ENCODE measurements at regions of chr11 and their contacts with region 1.

Region 1: GRCh38 chr11:27183672-27184457 is 143.2 kb downstream of the BBOX1 start:
- DNase-seq: peak; percentile 54 to 64
- H3K4me3 ChIP-seq: no peak overlapping the region
- H3K4me3 Mint-ChIP-seq: no peak overlapping the region
- H3K27ac Mint-ChIP-seq: no peak overlapping the region
- H3K4me1 ChIP-seq: peaks cover 26% of the 10 kb centered on the region
- H3K4me1 Mint-ChIP-seq: peaks cover 15% of the 10 kb centered on the region
- H3K27me3 ChIP-seq: no peaks in the 10 kb centered on the region
- H3K27me3 Mint-ChIP-seq: no peaks in the 10 kb centered on the region
- CTCF ChIP-seq: peak; percentile 73 to 83

Region 2: DNA sequence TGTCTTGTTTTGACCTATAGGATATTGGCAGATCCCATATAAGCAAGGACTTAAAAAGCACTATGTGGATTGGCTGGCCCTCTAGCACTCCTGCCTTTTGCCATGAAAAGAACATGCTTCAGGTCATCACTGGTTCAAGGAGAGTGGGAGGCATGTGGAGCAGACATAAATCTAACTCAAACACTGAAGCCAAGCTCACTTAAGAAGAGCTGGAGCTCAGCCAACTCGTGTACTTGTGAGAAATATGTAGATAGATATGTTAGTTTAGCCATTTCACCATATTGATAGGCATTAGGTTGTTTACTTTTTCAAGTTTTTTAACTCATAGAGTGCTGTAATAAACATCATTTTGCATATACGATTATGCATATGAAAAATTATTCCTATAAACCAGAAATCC is 163.1 kb before region 1 on chr11:
- CTCF ChIA-PET with region 1: no interaction called
- POLR2A ChIA-PET with region 1: no interaction called
- intact Hi-C with region 1: no loop called
- DNase-seq: no peak
- H3K4me3 ChIP-seq: no peak overlapping the region
- H3K4me3 Mint-ChIP-seq: no peak overlapping the region
- H3K27ac Mint-ChIP-seq: no peak overlapping the region
- H3K4me1 ChIP-seq: no peaks in the 10 kb centered on the region
- H3K4me1 Mint-ChIP-seq: peaks cover 12% of the 10 kb centered on the region
- H3K27me3 ChIP-seq: no peaks in the 10 kb centered on the region
- H3K27me3 Mint-ChIP-seq: no peaks in the 10 kb centered on the region
- CTCF ChIP-seq: no peak

Region 3: DNA sequence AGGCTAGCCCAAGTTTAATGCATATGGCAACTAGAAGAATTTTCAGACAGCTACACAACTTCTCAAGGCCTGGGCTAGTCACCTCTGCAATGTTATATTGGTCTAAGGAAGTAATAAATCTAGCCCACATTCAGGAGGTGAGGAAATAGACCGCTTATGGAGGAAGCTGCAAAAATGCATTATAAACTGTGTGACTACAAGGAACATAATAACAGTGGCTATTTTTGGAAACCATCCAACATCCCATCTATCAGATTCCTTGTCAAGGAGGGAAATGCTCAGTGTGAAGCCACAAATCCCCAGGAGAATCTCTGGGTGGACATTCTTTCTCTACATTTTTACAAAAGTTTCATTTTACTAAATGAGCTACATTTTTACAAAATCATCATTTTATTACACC is 67.2 kb before region 1 on chr11:
- CTCF ChIA-PET with region 1: no interaction called
- POLR2A ChIA-PET with region 1: no interaction called
- intact Hi-C with region 1: no loop called
- DNase-seq: no peak
- H3K4me3 ChIP-seq: no peak overlapping the region
- H3K4me3 Mint-ChIP-seq: no peak overlapping the region
- H3K27ac Mint-ChIP-seq: no peak overlapping the region
- H3K4me1 ChIP-seq: no peaks in the 10 kb centered on the region
- H3K4me1 Mint-ChIP-seq: no peaks in the 10 kb centered on the region
- H3K27me3 ChIP-seq: no peaks in the 10 kb centered on the region
- H3K27me3 Mint-ChIP-seq: no peaks in the 10 kb centered on the region
- CTCF ChIP-seq: no peak

Region 4: DNA sequence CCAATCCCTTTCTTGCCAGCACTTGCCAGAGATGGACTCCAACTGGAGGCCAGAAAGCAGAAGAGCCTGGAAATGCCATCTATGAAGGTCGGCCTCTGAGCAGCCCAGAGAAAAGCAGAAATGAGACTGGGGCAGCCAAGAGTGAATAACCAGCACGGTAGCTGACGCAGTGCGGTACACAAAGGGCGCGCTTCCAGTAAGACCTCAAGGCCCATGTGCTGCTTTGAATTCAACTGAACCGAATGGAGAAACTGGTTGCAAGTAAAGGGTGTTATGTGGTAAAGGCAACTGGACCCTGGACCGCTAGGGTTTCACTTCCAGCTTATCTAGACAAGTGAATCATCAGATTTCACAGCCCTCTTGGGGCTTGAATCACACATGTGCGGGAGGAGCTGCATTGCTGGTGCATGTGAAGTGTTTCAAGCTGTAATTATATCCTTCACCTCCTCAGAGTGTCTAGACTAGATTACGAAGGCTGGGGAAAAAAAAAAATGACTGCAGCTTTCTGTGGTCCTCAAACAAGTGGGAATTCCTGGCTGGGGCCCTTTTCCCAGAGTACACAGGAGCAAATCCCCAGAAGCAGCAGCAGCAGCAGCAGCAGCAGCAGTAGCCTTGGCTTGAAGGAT is 50.3 kb after region 1 on chr11:
- CTCF ChIA-PET with region 1: interaction called, 5 read pairs
- POLR2A ChIA-PET with region 1: no interaction called
- intact Hi-C with region 1: loop called (anchors 1 kb)
- DNase-seq: peak; percentile 61 to 75
- H3K4me3 ChIP-seq: no peak overlapping the region
- H3K4me3 Mint-ChIP-seq: peak overlapping the region; percentile 22
- H3K27ac Mint-ChIP-seq: no peak overlapping the region
- H3K4me1 ChIP-seq: peaks cover 38% of the 10 kb centered on the region
- H3K4me1 Mint-ChIP-seq: peaks cover 18% of the 10 kb centered on the region
- H3K27me3 ChIP-seq: no peaks in the 10 kb centered on the region
- H3K27me3 Mint-ChIP-seq: no peaks in the 10 kb centered on the region
- CTCF ChIP-seq: peak in 1 of 2 experiments; percentile 22

Region 5: DNA sequence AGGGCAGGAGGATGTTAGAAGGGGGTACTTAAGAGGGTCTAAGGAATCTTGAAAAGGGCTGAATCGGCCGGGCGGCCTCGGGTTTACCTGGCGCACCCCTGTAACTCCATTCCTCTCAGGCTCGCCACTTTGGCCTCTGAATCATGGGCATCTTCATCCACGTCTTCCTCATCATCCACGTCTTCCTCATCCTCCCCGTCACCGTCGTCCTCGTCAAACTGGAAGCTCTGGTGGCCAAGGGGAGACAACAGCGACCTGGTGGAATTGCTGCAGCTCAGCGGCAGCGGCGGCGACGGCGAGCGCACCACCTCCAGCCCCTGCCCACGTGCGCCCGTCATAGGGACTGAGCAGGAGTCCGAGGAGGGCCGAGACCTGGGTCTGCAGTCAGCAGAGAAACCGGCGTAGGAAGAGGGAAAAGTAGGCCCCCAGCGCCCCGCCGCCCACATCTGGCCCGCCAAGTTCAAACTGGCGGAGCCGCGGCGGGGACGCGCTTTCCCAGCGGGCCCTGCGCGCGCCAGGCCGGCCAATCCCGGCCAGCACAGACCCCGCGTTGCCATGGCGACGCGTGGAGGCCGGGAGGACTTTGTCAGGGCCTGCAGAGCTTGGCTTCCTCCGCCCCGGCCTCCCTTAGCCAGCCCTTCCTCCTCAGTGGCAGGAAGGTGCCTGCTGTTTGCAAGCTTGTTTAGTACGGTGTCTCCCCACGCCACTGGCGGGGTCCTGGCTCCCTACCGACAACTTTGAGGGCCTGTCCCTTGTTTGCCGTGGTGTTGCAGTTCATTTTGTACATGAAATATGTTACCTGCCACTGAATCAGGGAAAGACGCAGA is 179.1 kb after region 1 on chr11 and contains the start of gene CCDC34:
- CTCF ChIA-PET with region 1: no interaction called
- POLR2A ChIA-PET with region 1: no interaction called
- intact Hi-C with region 1: loop called (anchors 1 kb)
- DNase-seq: peak; percentile 93 to 95
- H3K4me3 ChIP-seq: peak within 1 kb of the TSS; percentile 80
- H3K4me3 Mint-ChIP-seq: peak within 1 kb of the TSS; percentile 94
- H3K27ac Mint-ChIP-seq: peak within 1 kb of the TSS; percentile 91
- H3K4me1 ChIP-seq: peaks cover 13% of the 10 kb centered on the region
- H3K4me1 Mint-ChIP-seq: peaks cover 36% of the 10 kb centered on the region
- H3K27me3 ChIP-seq: no peaks in the 10 kb centered on the region
- H3K27me3 Mint-ChIP-seq: no peaks in the 10 kb centered on the region
- CTCF ChIP-seq: no peak
- total RNA-seq, gene CCDC34: 25.0 and 25.7 TPM in 2 replicates

Region 6: GRCh38 chr11:27485930-27486773 is 302.3 kb after region 1 on chr11:
- CTCF ChIA-PET with region 1: interaction called, 20 read pairs
- POLR2A ChIA-PET with region 1: no interaction called
- intact Hi-C with region 1: loop called (anchors 1 kb)
- DNase-seq: peak in 1 of 2 experiments; percentile 67
- H3K4me3 ChIP-seq: no peak overlapping the region
- H3K4me3 Mint-ChIP-seq: no peak overlapping the region
- H3K27ac Mint-ChIP-seq: no peak overlapping the region
- H3K4me1 ChIP-seq: no peaks in the 10 kb centered on the region
- H3K4me1 Mint-ChIP-seq: no peaks in the 10 kb centered on the region
- H3K27me3 ChIP-seq: no peaks in the 10 kb centered on the region
- H3K27me3 Mint-ChIP-seq: no peaks in the 10 kb centered on the region
- CTCF ChIP-seq: peak; percentile 87 to 92

Measured in Caco-2 (cell line).